Right cardiac atrium (tissue), 5 donors: ENCODE measurements at regions of chr6 and their contacts with region 1.

Region 1: DNA sequence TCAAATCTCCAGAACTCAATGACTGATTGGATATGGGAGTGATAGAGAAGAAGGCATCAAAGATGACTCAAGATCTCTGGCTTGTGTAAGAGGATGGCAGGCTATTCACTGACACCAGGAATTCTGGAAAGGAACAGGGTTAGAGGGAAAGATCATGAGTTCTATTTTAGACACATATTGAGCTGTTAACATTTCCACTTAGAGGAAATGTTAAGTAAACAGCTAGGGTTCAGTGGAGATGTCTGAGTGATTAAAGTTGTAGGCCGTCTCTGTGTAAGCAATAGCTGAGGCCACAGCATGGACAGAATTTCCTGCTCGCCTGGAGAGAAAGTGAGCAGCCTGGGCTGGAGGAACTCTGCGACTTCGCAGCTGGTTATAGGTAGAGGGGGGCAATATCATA is 21.0 kb downstream of the ZC3H12D start:
- DNase-seq: no peak
- ATAC-seq: peak in 1 of 2 donors; percentile 32
- H3K4me3 ChIP-seq: no peak overlapping the region
- H3K27ac ChIP-seq: no peak overlapping the region
- H3K4me1 ChIP-seq: peaks cover 2% of the 10 kb centered on the region
- H3K27me3 ChIP-seq: no peaks in the 10 kb centered on the region

Region 2: GRCh38 chr6:149443411-149444181 is 20.2 kb before region 1 on chr6:
- intact Hi-C with region 1: loop called in 1 of 4 experiments (anchors 2 kb)
- DNase-seq: peak in 1 of 3 donors; percentile 43
- ATAC-seq: peak; percentile 35 to 44
- H3K4me3 ChIP-seq: no peak overlapping the region
- H3K27ac ChIP-seq: no peak overlapping the region
- H3K4me1 ChIP-seq: no peaks in the 10 kb centered on the region
- H3K27me3 ChIP-seq: no peaks in the 10 kb centered on the region

Region 3: GRCh38 chr6:149717588-149718458 is 254.0 kb after region 1 on chr6 and contains the start of gene LATS1:
- intact Hi-C with region 1: no loop called
- DNase-seq: peak; percentile 95 to 98 (median 97)
- ATAC-seq: peak; percentile 97
- H3K4me3 ChIP-seq: peak within 1 kb of the TSS; percentile 79
- H3K27ac ChIP-seq: peak within 1 kb of the TSS; percentile 98
- H3K4me1 ChIP-seq: no peaks in the 10 kb centered on the region
- H3K27me3 ChIP-seq: no peaks in the 10 kb centered on the region
- total RNA-seq, gene LATS1: 13.5 to 19.0 (median 14.5) TPM